Aorta (tissue), 5 donors: ENCODE measurements at regions of chr10 and their contacts with region 1.

Region 1: DNA sequence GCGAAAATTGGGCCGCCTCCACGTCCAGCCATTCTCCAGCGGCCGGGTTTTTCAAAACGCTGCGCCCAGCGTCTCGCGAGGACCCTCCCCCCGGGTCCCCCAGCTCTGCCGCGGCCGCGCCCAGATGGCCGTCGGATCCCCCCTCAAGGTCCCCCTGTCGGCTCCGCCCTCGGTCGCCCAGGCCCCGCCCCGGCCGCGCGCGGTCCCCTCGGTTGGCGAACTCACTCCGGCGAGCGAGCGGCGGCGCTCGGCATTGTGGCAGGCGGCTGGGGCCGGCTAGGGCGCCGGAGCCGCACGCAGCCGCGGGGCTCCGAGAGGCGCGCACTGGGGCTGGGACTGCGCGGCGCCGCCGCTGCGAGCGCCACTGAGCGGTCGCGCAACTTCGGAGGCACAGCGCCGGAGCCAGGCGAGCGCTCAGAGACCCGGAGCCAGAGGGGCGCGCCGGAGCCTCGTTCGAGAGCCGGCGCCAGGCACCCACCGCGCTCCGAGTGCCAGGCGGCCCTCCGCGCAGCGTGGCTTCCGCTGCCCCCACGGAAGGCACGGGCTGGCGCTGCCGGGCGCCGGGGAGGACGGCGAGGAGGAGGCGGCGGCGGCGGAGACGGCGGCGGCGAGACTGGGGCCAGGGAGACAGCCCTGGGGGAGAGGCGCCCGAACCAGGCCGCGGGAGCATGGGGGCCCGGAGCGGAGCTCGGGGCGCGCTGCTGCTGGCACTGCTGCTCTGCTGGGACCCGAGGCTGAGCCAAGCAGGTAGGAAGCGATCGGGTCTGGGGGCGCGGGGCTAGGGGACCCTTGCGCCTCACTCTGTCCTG is at the start of gene UNC5B:
- DNase-seq: peak; percentile 94 to 96
- ATAC-seq: peak; percentile 93
- H3K4me3 ChIP-seq: peak within 1 kb of the TSS; percentile 54 to 71
- H3K27ac ChIP-seq: peak within 1 kb of the TSS in 1 of 2 donors; percentile 65
- H3K4me1 ChIP-seq: peaks cover 0 to 3% of the 10 kb centered on the region in 2 donors
- H3K27me3 ChIP-seq: no peaks in the 10 kb centered on the region
- total RNA-seq, gene UNC5B: 7.9 to 13.0 TPM

Region 2: GRCh38 chr10:70925377-70926225 is 286.9 kb before region 1 on chr10:
- intact Hi-C with region 1: loop called (anchors 1 to 2 kb)
- DNase-seq: peak; percentile 61 to 89
- ATAC-seq: peak; percentile 83
- H3K4me3 ChIP-seq: no peak overlapping the region
- H3K27ac ChIP-seq: no peak overlapping the region
- H3K4me1 ChIP-seq: no peaks in the 10 kb centered on the region
- H3K27me3 ChIP-seq: no peaks in the 10 kb centered on the region

Region 3: DNA sequence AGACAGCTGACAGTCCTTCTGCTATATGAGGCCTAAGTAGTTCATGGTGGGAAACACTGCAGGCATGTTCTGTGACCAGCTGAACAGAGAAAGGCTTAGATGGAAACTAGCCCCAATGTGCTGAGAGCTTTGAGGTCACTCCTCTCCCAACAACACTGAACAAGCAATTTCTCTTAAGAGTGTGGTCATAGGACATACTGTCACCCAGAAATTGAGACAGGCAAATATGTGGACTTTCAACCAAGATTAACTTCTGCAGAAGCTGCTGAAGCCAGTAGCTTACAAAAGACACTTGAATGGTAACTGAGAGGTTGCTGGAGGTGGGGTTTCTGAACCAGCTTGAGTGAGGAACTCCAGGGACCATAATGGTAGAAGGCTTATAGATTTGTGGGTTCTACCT is 39.1 kb before region 1 on chr10:
- intact Hi-C with region 1: no loop called
- DNase-seq: no peak
- ATAC-seq: no peak
- H3K4me3 ChIP-seq: no peak overlapping the region
- H3K27ac ChIP-seq: no peak overlapping the region
- H3K4me1 ChIP-seq: no peaks in the 10 kb centered on the region
- H3K27me3 ChIP-seq: no peaks in the 10 kb centered on the region

Region 4: GRCh38 chr10:71234970-71235685 is 22.6 kb after region 1 on chr10:
- intact Hi-C with region 1: loop called in 1 of 2 experiments (anchors 2 kb)
- DNase-seq: peak; percentile 84 to 88
- ATAC-seq: peak; percentile 58
- H3K4me3 ChIP-seq: no peak overlapping the region
- H3K27ac ChIP-seq: no peak overlapping the region
- H3K4me1 ChIP-seq: no peaks in the 10 kb centered on the region
- H3K27me3 ChIP-seq: no peaks in the 10 kb centered on the region

Region 5: DNA sequence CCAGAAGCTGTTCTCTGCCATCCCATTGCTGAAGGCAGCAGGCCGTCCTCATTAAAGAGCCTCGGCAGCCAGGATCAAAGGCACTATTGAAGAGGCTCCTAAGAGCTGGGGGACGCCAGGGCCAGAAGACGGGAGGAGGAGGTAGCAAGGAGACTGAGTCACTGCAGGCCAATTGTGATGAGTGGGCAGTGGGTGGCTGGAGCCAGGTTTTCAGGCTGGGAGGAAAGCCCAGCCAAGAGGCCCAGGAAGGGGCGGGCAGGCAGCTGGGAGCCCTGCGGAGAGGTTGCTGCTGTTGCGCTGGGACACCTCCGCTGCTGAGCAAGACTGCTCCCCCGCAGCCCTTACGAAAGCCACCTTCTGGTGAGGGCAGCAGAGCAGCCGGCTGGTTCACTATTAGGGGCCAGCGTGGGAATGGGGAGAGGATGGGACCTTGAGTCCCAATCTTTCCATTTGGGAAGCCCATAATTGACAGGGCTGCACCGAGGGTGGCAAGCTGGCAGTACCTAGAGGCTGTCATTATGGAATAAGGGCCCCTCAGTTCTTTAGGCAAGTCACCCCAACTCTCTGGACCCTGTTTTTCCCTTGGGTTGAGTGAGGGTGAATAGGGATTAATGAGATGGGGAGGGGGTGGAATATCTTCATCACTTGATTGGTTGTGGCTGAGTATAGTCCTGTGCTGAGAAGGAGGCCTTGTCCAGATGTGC is 48.3 kb after region 1 on chr10:
- intact Hi-C with region 1: loop called (anchors 2 to 5 kb)
- DNase-seq: peak; percentile 80 to 88
- ATAC-seq: no peak
- H3K4me3 ChIP-seq: no peak overlapping the region
- H3K27ac ChIP-seq: peak overlapping the region in 1 of 2 donors; percentile 11
- H3K4me1 ChIP-seq: no peaks in the 10 kb centered on the region
- H3K27me3 ChIP-seq: no peaks in the 10 kb centered on the region

Region 6: GRCh38 chr10:71268247-71268691 is 55.7 kb after region 1 on chr10:
- intact Hi-C with region 1: loop called (anchors 2 to 5 kb)
- DNase-seq: no peak
- ATAC-seq: no peak
- H3K4me3 ChIP-seq: no peak overlapping the region
- H3K27ac ChIP-seq: no peak overlapping the region
- H3K4me1 ChIP-seq: no peaks in the 10 kb centered on the region
- H3K27me3 ChIP-seq: no peaks in the 10 kb centered on the region

Region 7: GRCh38 chr10:71285180-71285545 is 72.6 kb after region 1 on chr10:
- intact Hi-C with region 1: loop called (anchors 2 to 5 kb)
- DNase-seq: no peak
- ATAC-seq: peak; percentile 36
- H3K4me3 ChIP-seq: no peak overlapping the region
- H3K27ac ChIP-seq: no peak overlapping the region
- H3K4me1 ChIP-seq: no peaks in the 10 kb centered on the region
- H3K27me3 ChIP-seq: no peaks in the 10 kb centered on the region